ENCODE measurements at regions of chr1 and their contacts with region 1.

Region 1: DNA sequence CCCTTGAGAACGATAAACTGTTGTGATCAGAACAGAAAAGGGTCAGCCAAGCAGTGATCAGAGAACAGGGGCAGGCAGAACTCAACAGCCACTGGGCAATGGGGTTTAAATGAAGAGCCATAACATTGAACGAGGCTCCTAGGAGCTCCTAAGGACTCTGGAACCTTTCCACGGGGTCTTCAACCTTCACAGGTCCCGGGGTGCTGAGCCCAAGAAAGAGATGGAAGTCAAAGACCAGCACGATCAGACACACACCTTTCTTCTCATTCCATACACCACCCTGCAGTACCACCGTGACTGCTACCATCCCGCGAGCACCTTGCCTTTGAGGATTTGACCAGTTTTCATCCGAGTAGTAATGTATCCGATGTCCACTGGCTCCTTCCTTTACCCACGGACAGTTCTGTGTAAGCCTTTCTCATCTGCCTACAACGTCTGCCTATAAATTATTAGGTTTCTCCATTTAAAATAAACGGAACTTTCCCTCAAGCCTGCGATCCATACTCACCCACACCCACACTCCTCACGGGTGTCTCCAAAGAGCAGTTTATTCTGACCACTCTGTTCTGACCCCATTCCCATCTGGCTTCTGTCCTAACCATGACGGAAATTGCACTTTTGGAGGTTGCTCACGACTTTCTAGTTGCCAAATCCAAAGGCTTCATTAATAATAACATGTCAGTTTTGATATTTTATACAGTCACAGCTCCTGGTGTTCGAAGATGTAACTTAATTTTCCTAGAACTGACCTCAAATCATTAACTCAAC is 16.8 kb upstream of the HHAT start:
- DNase-seq: no peak
- ATAC-seq: no peak; the same call in 1 of the 3 replicates
- H3K4me3 ChIP-seq: no peak overlapping the region
- H3K27ac ChIP-seq: no peak overlapping the region
- H3K4me1 ChIP-seq: no peaks in the 10 kb centered on the region
- H3K27me3 ChIP-seq: peaks cover 0 to 2% of the 10 kb centered on the region in 2 experiments; a peak in 3 of 4 replicates
- CTCF ChIP-seq: no peak
- EP300 ChIP-seq: no peak
- POLR2A ChIP-seq: no peak
- RAD21 ChIP-seq: no peak

Region 2: GRCh38 chr1:209860293-209860881 is 451.5 kb before region 1 on chr1:
- CTCF ChIA-PET with region 1: interaction called, 32 read pairs
- POLR2A ChIA-PET with region 1: no interaction called
- RAD21 ChIA-PET with region 1: interaction called, 4 read pairs
- SMC1A ChIA-PET with region 1: interaction called, 6 read pairs
- in situ Hi-C with region 1: loop called (anchors 5 kb)
- intact Hi-C with region 1: loop called (anchors 1 kb)
- DNase-seq: no peak
- ATAC-seq: peak; percentile 100
- H3K4me3 ChIP-seq: no peak overlapping the region
- H3K27ac ChIP-seq: no peak overlapping the region
- H3K4me1 ChIP-seq: no peaks in the 10 kb centered on the region
- H3K27me3 ChIP-seq: no peaks in the 10 kb centered on the region; a peak in 1 of 4 replicates
- CTCF ChIP-seq: peak; percentile 77 to 84 (median 83)
- EP300 ChIP-seq: no peak
- POLR2A ChIP-seq: no peak
- RAD21 ChIP-seq: peak; percentile 66

Region 3: DNA sequence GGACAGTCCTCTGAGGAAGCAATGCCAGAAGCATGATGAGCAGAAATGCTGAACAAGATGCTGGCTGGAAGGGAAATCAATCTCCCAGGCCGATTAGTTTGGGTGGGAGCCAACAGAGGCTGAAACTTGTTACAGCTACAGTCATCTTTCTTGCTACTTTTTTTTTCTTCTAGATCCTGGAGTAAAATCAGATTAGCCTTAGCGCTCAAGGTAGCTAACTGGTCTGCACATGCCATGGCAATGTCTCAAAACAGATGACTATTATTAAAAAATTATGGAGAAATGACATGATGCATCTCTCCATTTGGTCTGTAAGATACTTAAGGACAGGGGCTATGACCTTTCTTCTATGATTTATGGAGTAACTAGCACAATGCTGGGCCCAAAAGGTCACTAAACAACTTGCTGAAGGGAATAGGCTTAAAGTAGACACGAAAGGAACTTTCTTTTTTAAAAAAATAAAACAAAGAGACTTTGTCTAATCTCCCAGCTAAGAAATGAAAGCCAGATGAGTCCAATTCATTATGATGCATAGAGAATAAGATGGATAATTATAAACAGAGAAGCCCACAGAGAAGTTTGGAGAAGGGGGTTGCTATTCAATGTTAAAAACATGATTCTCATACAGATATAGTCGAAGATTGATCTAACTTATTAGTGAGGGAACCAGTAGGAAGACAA is 441.6 kb before region 1 on chr1:
- CTCF ChIA-PET with region 1: no interaction called
- POLR2A ChIA-PET with region 1: no interaction called
- RAD21 ChIA-PET with region 1: no interaction called
- SMC1A ChIA-PET with region 1: no interaction called
- in situ Hi-C with region 1: loop called (anchors 5 kb)
- intact Hi-C with region 1: no loop called
- DNase-seq: no peak
- ATAC-seq: no peak
- H3K4me3 ChIP-seq: no peak overlapping the region
- H3K27ac ChIP-seq: no peak overlapping the region
- H3K4me1 ChIP-seq: no peaks in the 10 kb centered on the region
- H3K27me3 ChIP-seq: no peaks in the 10 kb centered on the region
- CTCF ChIP-seq: no peak
- EP300 ChIP-seq: no peak
- POLR2A ChIP-seq: no peak
- RAD21 ChIP-seq: no peak

Region 4: GRCh38 chr1:210143465-210144062 is 168.3 kb before region 1 on chr1:
- CTCF ChIA-PET with region 1: interaction called, 20 read pairs
- POLR2A ChIA-PET with region 1: no interaction called
- RAD21 ChIA-PET with region 1: interaction called, 11 read pairs
- SMC1A ChIA-PET with region 1: interaction called, 22 read pairs
- in situ Hi-C with region 1: loop called (anchors 5 kb)
- intact Hi-C with region 1: loop called (anchors 1 kb)
- DNase-seq: no peak
- ATAC-seq: peak; percentile 61
- H3K4me3 ChIP-seq: no peak overlapping the region
- H3K27ac ChIP-seq: no peak overlapping the region
- H3K4me1 ChIP-seq: no peaks in the 10 kb centered on the region
- H3K27me3 ChIP-seq: no peaks in the 10 kb centered on the region
- CTCF ChIP-seq: peak; percentile 31 to 71 (median 46); a peak in 5 of 6 replicates
- EP300 ChIP-seq: no peak
- POLR2A ChIP-seq: no peak
- RAD21 ChIP-seq: peak; percentile 71

Region 5: DNA sequence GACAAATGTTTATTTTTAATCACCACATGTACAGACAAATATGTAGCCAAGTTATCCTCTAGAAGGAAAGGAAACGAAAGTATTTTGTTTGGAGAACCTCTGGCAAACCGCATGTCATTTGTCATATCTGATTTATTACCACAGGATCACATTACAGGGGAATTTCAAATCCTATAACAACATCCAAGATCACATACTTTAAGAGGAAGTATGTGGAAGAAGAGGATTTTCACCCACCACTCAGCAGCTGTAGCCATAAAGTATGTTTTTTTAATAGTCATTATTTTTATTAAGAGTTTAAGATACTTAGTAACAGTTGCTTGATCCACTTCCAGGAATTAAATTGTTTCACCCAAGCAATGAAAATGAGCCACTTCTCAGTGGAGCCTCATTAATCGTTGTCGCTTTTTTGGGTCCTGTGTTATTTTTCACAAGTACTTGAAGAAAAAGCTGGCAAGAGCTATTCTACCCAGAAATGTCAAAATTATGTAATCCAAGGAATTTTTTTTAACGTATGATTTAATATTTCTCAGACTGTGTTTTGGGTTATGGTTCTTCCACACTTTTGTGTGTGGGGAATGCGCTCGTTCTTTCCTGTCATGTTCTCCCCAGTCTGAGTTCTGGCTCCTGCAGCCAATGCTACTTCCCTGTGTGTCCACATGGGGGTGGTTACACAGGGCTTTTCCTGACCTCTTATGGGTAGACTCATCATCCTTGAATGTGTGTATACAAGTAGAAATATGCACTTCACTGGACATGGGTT is 72.4 kb before region 1 on chr1:
- CTCF ChIA-PET with region 1: no interaction called
- POLR2A ChIA-PET with region 1: no interaction called
- RAD21 ChIA-PET with region 1: no interaction called
- SMC1A ChIA-PET with region 1: no interaction called
- in situ Hi-C with region 1: no loop called
- intact Hi-C with region 1: no loop called
- DNase-seq: no peak
- ATAC-seq: 0 out of 3 replicates have a peak, but pooled peaks have one; percentile 27
- H3K4me3 ChIP-seq: no peak overlapping the region
- H3K27ac ChIP-seq: no peak overlapping the region
- H3K4me1 ChIP-seq: no peaks in the 10 kb centered on the region
- H3K27me3 ChIP-seq: peaks cover 0 to 2% of the 10 kb centered on the region in 2 experiments; a peak in 2 of 4 replicates
- CTCF ChIP-seq: peak in 2 of 3 experiments; percentile 10 to 12; a peak in 1 of 6 replicates
- EP300 ChIP-seq: no peak
- POLR2A ChIP-seq: no peak
- RAD21 ChIP-seq: no peak